OCI-LY7 (cell line): ENCODE measurements at regions of chr7 and their contacts with region 1.

Region 1: GRCh38 chr7:39623018-39623731 is at the start of gene RALA:
- DNase-seq: peak; percentile 87
- H3K4me3 ChIP-seq: peak within 1 kb of the TSS; percentile 86
- H3K27ac ChIP-seq: peak within 1 kb of the TSS; percentile 17
- H3K4me1 ChIP-seq: peaks cover 27% of the 10 kb centered on the region
- CTCF ChIP-seq: no peak
- total RNA-seq, gene RALA: 5.7 and 6.4 TPM in 2 replicates

Region 2: DNA sequence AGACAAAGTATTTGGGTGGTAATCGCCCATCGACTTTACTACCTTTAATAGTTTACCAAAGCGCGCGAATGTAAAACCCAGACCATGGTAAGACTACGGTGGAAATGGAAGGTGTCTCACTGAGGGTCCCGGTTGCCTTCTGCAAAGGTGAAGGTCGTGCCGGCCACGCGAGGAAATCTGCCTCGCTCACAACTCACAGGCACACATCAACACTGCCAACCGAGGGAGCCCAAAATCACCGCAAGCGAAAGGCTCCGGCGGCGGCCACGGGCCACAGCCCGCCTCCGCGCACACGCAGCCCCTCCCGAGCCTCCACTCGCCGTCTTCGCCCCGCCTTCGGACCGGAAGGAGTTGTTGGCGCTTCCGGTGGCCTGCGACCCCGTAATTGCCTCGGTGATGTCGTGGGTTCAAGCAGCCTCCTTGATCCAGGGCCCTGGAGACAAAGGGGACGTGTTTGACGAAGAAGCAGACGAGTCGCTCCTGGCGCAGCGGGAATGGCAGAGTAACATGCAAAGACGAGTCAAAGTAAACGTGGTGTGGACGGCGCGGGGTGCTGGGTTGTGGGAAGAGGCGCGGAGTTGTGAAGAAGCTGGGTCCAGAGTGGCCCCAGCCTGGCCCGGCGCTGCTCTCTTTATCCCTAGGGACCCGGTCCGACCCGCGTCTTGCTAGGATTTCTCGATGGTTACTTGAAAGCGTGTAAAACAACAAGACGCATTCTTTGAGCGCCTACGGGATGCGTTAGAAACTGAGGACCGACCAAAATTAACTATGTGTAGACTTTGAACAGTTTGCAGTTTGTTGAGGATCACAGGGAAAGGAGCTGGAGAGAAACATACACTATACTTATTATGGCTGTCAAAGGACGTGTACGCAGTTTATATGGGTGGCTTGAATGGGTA is 56.9 kb before region 1 on chr7 and contains the start of gene YAE1:
- CTCF ChIA-PET with region 1: interaction called, 3 read pairs
- POLR2A ChIA-PET with region 1: interaction called, 9 read pairs
- intact Hi-C with region 1: loop called (anchors 2 kb)
- DNase-seq: peak; percentile 86
- H3K4me3 ChIP-seq: peak within 1 kb of the TSS; percentile 88
- H3K27ac ChIP-seq: peak within 1 kb of the TSS; percentile 38
- H3K4me1 ChIP-seq: peaks cover 14% of the 10 kb centered on the region
- CTCF ChIP-seq: no peak
- total RNA-seq, gene YAE1: 25.5 and 37.5 TPM in 2 replicates

Region 3: DNA sequence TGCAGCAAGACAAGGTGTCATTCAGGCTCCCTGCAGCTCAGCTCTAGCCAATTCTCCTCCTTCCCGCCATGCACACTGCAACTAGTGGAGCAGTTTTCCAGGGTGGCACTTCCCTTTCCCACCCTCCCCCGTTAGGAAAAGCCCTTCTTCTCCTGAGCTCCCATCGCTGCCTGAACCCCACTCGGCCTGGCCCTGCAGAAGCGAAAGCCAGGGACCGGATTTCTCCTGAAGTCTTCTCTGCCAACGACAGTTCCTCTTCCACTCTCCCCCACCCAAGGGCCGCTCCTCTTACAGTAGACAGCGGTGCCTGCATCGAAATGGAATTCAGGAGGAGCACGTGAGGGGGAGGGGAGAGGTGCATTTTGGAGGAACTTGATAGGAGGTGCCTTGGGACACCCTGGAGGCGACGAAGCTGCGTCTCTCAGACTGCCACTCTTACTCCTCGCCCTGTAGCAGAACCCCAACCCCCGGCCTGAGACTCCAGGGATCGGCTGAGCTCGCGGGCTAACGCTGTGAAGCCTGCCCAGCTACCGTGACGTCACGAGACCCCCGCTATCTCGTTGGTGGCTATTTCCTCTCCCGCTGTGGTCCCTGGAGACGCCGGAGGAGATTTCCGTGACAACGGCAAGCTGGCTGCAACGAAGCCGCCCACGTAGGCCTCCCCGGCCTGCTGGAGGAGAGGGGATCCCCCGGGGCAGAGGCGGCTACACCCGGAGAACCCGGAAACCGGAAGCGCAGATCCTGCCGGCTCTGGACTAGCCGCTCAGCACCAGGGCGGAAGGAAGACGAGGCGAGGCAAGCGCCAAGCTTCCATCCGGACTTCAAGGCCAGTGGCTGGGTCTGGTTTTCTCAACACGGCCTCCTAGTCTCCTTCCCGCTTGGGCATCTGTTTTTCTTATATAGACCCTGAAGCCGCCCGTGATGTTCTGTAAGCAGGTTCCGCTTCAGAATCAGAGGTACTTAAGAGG is 109.9 kb after region 1 on chr7:
- CTCF ChIA-PET with region 1: interaction called, 3 read pairs
- POLR2A ChIA-PET with region 1: interaction called, 13 read pairs
- intact Hi-C with region 1: loop called (anchors 1 kb)
- DNase-seq: peak; percentile 94
- H3K4me3 ChIP-seq: peak overlapping the region; percentile 86
- H3K27ac ChIP-seq: peak overlapping the region; percentile 72
- H3K4me1 ChIP-seq: peaks cover 35% of the 10 kb centered on the region
- CTCF ChIP-seq: no peak

Region 4: DNA sequence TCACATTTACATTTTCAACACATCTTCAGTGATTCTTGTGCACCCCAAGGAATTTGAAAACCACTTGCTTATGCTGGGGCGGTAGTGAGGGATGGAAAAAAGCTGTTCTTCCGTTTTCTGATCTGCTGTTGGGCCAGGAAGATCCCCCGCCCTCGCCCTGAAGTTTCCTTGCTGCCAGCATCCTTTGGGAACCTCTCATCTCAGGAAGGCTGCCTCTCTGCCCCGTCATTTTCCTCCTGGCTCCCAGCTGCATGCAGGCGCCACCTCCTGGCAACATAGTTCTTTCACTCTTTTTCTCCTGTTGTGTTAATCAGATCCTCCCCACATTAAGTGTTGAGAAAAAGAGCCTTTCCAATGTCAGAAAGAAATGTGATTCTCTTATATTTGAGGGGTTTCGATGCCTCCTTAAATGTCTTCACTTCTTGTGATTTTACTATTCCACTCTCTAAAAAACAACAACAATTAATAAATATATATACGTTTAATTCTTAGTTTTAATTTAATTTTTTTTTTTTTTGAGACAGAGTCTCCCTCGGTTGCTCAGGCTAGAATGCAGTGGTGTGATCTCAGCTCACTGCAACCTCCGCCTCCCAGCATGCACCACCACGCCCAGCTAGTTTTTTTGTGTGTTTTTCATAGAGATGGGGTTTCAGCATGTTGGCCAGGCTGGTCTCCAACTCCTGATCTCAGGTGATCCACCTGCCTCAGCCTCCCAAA is 123.1 kb after region 1 on chr7:
- CTCF ChIA-PET with region 1: interaction called, 3 read pairs
- POLR2A ChIA-PET with region 1: interaction called, 3 read pairs
- intact Hi-C with region 1: loop called (anchors 5 kb)
- DNase-seq: peak; percentile 64
- H3K4me3 ChIP-seq: no peak overlapping the region
- H3K27ac ChIP-seq: no peak overlapping the region
- H3K4me1 ChIP-seq: no peaks in the 10 kb centered on the region
- CTCF ChIP-seq: peak; percentile 93

Region 5: GRCh38 chr7:40134428-40135316 is 511.5 kb after region 1 on chr7 and contains the starts of genes MPLKIP and SUGCT:
- CTCF ChIA-PET with region 1: no interaction called
- POLR2A ChIA-PET with region 1: no interaction called
- intact Hi-C with region 1: loop called (anchors 5 kb)
- DNase-seq: peak; percentile 91
- H3K4me3 ChIP-seq: peak within 1 kb of the TSS; percentile 100
- H3K27ac ChIP-seq: peak within 1 kb of the TSS; percentile 89
- H3K4me1 ChIP-seq: peaks cover 18% of the 10 kb centered on the region
- CTCF ChIP-seq: peak; percentile 91
- total RNA-seq, gene MPLKIP: 35.2 and 44.1 TPM in 2 replicates
- total RNA-seq, gene SUGCT: 1.7 TPM in 1 of 2 replicates, not detected in the other